ENCODE measurements at regions of chr3 and their contacts with region 1.

Region 1: DNA sequence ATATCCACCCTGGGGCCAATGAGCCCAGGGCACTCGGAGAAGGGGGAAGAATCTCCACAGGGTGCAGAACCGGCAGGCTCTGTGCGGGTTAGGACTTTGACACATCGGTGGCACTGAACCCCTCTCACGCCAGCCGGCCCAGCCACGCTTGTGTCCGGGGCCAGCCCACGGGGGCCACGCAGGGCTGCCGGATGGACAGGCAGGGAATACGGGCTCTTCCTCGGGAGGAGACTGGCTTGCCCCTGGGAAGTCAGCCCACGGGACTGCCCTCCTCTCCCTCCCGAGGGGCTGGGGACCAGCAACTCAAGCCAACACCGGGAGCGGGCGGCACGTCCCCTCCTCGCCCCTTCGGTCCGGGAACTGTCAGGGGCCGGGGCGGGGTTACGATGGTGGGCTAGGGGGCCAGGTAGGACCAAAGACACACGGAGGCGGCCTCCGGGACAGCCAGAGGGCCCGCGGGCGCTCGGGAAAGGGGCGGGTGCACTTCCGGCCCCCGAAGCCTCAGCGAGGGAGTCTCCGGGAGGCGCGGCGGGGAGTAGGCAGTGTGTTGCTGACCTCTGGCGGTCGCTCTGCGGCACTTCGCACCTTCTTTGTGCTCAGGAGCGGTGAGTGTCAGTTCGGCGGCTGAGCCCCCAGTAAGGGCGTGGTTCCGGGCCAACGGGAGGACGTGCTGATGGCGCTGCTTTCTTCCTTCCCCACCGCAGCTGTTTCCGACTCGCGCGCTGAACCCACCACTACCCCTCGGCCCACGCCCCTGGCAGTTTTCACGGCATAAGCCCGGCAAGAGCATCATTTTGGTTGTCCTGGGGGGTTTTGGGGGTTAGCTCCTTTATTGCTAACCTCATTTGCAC is 5.1 kb upstream of the CYP8B1 start:
- DNase-seq: peak; percentile 86
- H3K4me3 Mint-ChIP-seq: peak overlapping the region; percentile 83
- H3K27ac Mint-ChIP-seq: peak overlapping the region; percentile 49
- H3K4me1 Mint-ChIP-seq: peaks cover 23% of the 10 kb centered on the region
- H3K27me3 Mint-ChIP-seq: peaks cover 37% of the 10 kb centered on the region
- CTCF ChIP-seq: peak; percentile 79

Region 2: GRCh38 chr3:42790714-42791229 is 90.1 kb before region 1 on chr3:
- CTCF ChIA-PET with region 1: no interaction called
- intact Hi-C with region 1: no loop called
- DNase-seq: no peak
- H3K4me3 Mint-ChIP-seq: no peak overlapping the region
- H3K27ac Mint-ChIP-seq: no peak overlapping the region
- H3K4me1 Mint-ChIP-seq: no peaks in the 10 kb centered on the region
- H3K27me3 Mint-ChIP-seq: no peaks in the 10 kb centered on the region
- CTCF ChIP-seq: no peak

Region 3: GRCh38 chr3:42831321-42831713 is 49.5 kb before region 1 on chr3:
- CTCF ChIA-PET with region 1: interaction called, 4 read pairs
- intact Hi-C with region 1: loop called (anchors 1 kb)
- DNase-seq: peak; percentile 78
- H3K4me3 Mint-ChIP-seq: no peak overlapping the region
- H3K27ac Mint-ChIP-seq: no peak overlapping the region
- H3K4me1 Mint-ChIP-seq: peaks cover 44% of the 10 kb centered on the region
- H3K27me3 Mint-ChIP-seq: no peaks in the 10 kb centered on the region
- CTCF ChIP-seq: peak; percentile 48